OCI-LY7 (cell line): ENCODE measurements at regions of chr1 and their contacts with region 1.

Region 1: DNA sequence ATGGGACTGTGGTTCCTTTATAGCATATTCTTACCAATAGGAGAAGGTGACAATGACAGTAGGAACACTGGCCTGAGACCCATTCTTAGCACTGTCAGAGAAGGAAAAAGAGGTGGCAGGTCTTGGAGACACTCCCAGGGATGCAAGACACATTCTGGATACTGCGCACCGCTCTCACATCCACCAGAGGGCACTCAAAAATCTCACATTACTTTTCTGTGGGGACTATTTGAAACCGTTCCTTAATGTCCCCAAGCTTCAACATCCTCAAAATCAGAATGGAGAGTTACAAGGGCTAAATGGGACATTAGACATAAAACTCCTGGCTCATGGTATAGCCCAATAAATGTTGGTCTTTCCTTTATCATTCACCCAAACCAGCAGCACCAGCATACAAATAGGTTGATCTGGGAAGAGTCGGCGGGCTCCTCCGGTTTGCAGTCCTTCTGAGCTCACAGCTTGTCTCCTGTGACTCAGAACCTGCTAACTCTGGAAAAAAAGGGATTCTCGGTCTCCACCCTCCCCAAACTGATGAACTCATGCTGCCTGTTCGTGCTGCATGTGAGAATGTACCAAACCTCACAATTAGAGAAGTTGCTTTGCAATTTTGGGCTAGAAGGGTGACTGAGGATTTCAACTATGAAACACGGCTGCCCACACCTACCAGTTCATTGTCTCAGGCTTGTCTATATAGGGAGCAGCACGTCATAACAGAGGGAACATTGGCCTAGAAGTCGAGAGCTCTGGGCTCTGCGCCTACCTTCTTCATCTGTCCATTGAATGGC is 40.2 kb downstream of the IL12RB2 start:
- DNase-seq: peak; percentile 55
- H3K4me3 ChIP-seq: no peak overlapping the region
- H3K27ac ChIP-seq: no peak overlapping the region
- H3K4me1 ChIP-seq: no peaks in the 10 kb centered on the region
- CTCF ChIP-seq: peak; percentile 91

Region 2: GRCh38 chr1:67230539-67230938 is 117.3 kb before region 1 on chr1:
- CTCF ChIA-PET with region 1: no interaction called
- POLR2A ChIA-PET with region 1: no interaction called
- intact Hi-C with region 1: loop called (anchors 10 kb)
- DNase-seq: no peak
- H3K4me3 ChIP-seq: no peak overlapping the region
- H3K27ac ChIP-seq: no peak overlapping the region
- H3K4me1 ChIP-seq: no peaks in the 10 kb centered on the region
- CTCF ChIP-seq: no peak

Region 3: GRCh38 chr1:67376381-67376780 is 28.5 kb after region 1 on chr1:
- CTCF ChIA-PET with region 1: no interaction called
- POLR2A ChIA-PET with region 1: no interaction called
- intact Hi-C with region 1: no loop called
- DNase-seq: no peak
- H3K4me3 ChIP-seq: no peak overlapping the region
- H3K27ac ChIP-seq: no peak overlapping the region
- H3K4me1 ChIP-seq: no peaks in the 10 kb centered on the region
- CTCF ChIP-seq: no peak